ENCODE measurements at regions of chr3 and their contacts with region 1.

Region 1: DNA sequence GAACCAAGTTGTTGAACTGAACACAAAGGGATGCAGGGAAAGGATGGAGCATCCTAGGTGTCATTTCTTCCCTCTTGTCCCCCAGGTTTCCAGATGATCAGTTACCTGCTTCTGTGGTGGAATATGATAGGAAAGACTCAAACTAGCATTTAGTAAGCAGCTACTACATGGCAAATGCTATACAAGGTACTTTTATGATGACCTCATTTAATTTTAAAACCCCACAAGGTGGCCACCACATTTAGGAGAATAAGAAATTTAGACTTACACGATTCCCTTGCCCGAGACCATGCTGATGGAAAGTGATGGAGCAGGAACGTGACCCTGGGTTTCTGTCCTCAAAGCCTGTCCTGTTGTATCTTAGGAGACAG is 40.9 kb downstream of the CCR4 start:
- DNase-seq: no peak
- ATAC-seq: peak; percentile 12
- H3K4me3 Mint-ChIP-seq: peak overlapping the region; percentile 42
- H3K27ac Mint-ChIP-seq: peak overlapping the region; percentile 92
- H3K4me1 Mint-ChIP-seq: peaks cover 56% of the 10 kb centered on the region
- H3K27me3 Mint-ChIP-seq: no peaks in the 10 kb centered on the region
- CTCF ChIP-seq: no peak

Region 2: GRCh38 chr3:32960404-32961170 is 31.7 kb before region 1 on chr3:
- CTCF ChIA-PET with region 1: interaction called, 6 read pairs
- POLR2A ChIA-PET with region 1: interaction called, 5 read pairs
- intact Hi-C with region 1: loop called (anchors 2 kb)
- DNase-seq: peak; percentile 22
- ATAC-seq: peak; percentile 67
- H3K4me3 Mint-ChIP-seq: no peak overlapping the region
- H3K27ac Mint-ChIP-seq: peak overlapping the region; percentile 84
- H3K4me1 Mint-ChIP-seq: peaks cover 40% of the 10 kb centered on the region
- H3K27me3 Mint-ChIP-seq: no peaks in the 10 kb centered on the region
- CTCF ChIP-seq: no peak

Region 3: DNA sequence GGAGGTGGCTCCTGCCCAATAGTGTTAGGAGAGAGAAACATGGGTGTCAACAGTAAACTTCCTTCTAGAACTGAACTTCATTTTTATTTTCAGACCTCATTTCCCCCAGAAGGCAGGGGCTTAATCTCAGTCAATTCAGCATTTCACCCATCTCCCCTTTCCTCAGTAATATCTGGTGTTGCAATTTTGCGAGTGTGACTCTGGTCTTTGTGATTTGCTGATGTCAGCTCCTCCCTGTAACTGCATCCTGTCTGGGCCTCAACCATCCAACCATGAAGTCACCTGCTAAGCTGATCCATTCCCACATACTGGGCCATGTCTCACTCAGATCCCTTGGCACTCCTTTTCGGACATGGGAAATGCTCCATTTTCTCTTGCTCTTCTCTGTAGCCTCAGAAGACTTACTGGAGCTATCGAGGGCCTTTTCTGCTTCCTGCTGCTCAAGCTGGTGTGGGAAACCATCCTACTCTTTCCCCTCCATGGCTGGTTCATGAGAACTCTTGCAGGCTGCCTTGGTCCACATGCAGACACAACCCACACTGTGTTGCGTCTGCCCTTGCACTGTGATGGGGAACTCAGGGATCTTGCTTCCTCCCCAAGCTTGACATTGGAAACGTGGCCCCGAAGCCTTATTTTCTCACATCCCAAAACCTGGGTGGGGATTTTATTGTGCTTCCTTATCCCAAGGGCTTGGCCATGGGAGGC is 16.3 kb before region 1 on chr3:
- CTCF ChIA-PET with region 1: interaction called, 4 read pairs
- POLR2A ChIA-PET with region 1: interaction called, 11 read pairs
- intact Hi-C with region 1: no loop called
- DNase-seq: no peak
- ATAC-seq: no peak
- H3K4me3 Mint-ChIP-seq: no peak overlapping the region
- H3K27ac Mint-ChIP-seq: peak overlapping the region; percentile 22
- H3K4me1 Mint-ChIP-seq: peaks cover 23% of the 10 kb centered on the region
- H3K27me3 Mint-ChIP-seq: no peaks in the 10 kb centered on the region
- CTCF ChIP-seq: no peak

Region 4: DNA sequence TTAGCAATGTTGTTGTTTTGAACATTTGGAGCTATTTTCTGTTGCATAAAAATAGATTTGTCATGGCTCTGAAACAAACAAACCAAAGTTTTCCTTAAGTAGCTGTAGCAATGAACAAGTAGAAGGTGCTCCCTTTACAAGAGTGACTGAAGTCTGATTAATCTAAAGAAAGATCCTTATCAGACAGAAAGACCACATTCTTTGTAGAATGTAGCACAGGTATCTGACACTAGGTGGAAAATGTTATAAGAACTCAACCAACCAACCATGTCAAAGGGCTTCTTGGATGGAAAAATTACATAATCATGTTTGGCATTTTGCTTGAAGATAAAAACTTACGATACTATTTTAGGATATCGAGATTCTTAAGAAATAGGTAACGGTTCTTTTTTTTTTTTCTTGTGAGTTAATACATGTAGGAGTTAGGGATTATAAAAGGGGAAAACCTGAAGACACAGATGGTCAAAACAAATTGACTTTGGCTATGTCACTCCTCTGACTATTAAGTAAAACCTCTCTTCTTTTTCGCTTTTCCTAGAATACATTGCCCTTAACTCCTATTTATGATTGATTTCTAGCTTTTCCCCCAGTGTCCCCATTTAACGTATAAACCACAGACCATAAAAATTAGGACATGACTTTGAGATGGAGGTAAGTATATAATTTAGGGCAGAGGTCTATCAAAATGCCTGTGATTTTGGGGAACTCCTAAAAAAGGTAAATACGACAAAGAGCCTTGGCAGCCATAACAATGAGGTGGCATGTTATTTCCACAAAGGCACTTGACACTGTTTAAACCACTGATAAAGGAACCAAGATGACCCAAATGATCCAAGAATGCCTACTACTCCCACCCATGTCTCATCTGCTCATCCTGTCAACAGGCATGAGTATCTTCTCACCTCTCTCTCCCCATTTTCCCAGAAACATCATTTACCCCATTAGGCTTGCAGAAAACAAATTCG is 31.1 kb after region 1 on chr3:
- CTCF ChIA-PET with region 1: interaction called, 4 read pairs
- POLR2A ChIA-PET with region 1: interaction called, 4 read pairs
- intact Hi-C with region 1: loop called (anchors 1 kb)
- DNase-seq: peak; percentile 33
- ATAC-seq: peak; percentile 86
- H3K4me3 Mint-ChIP-seq: peak overlapping the region; percentile 38
- H3K27ac Mint-ChIP-seq: peak overlapping the region; percentile 95
- H3K4me1 Mint-ChIP-seq: peaks cover 49% of the 10 kb centered on the region
- H3K27me3 Mint-ChIP-seq: no peaks in the 10 kb centered on the region
- CTCF ChIP-seq: peak; percentile 32

Region 5: DNA sequence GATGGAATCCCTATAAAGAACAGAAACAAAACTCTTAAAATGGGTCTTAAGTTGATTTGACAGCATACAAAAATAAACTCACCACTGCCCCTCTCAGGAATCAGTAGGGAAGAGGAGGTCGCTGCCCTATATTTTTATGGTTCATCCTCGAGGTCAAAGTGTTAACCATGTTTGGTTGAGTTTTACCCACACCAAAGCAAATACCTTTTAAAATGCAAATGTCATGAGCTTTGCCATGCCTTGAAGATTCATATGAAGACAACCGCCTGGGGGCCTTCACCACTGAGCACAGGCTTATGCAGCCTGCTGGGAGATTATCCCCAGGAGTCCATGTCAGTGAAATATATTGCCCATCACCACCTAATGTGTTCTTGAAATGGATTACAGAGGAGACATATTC is 38.5 kb after region 1 on chr3:
- CTCF ChIA-PET with region 1: interaction called, 9 read pairs
- POLR2A ChIA-PET with region 1: interaction called, 7 read pairs
- intact Hi-C with region 1: loop called (anchors 2 kb)
- DNase-seq: peak; percentile 84
- ATAC-seq: peak; percentile 92
- H3K4me3 Mint-ChIP-seq: no peak overlapping the region
- H3K27ac Mint-ChIP-seq: no peak overlapping the region
- H3K4me1 Mint-ChIP-seq: peaks cover 23% of the 10 kb centered on the region
- H3K27me3 Mint-ChIP-seq: no peaks in the 10 kb centered on the region
- CTCF ChIP-seq: peak; percentile 36